ENCODE measurements at regions of chr1 and their contacts with region 1.

Region 1: GRCh38 chr1:241640029-241640818 is at the starts of genes CHML and OPN3:
- DNase-seq: peak; percentile 96
- H3K4me3 Mint-ChIP-seq: peak within 1 kb of the TSS; percentile 75
- H3K27ac Mint-ChIP-seq: peak within 1 kb of the TSS; percentile 100
- H3K4me1 Mint-ChIP-seq: peaks cover 56% of the 10 kb centered on the region
- H3K27me3 Mint-ChIP-seq: no peaks in the 10 kb centered on the region
- CTCF ChIP-seq: no peak
- total RNA-seq, gene CHML: 33.7 and 33.8 TPM in 2 replicates
- total RNA-seq, gene OPN3: 45.6 and 56.1 TPM in 2 replicates

Region 2: DNA sequence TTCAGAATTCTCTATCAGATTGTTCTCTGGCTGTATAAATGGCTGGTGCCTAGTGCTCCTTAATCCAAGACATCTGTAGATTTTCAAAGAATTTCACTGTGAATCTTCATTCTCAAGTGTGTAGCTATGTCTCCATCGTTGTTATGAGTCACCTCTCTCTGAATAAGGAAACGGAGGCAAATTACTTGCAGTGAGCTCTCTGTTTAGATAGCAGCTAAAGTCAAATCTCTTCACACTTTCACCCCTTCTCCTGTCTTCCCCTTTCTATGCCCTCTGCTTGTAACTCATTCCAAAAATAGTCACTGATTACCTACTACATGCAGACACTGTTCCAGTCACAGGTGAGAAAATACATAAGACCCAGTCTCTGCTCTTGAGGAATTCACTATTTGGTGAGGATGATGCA is 39.7 kb before region 1 on chr1:
- CTCF ChIA-PET with region 1: no interaction called
- POLR2A ChIA-PET with region 1: interaction called, 10 read pairs
- intact Hi-C with region 1: no loop called
- DNase-seq: peak; percentile 58
- H3K4me3 Mint-ChIP-seq: no peak overlapping the region
- H3K27ac Mint-ChIP-seq: peak overlapping the region; percentile 77
- H3K4me1 Mint-ChIP-seq: peaks cover 52% of the 10 kb centered on the region
- H3K27me3 Mint-ChIP-seq: no peaks in the 10 kb centered on the region
- CTCF ChIP-seq: no peak

Region 3: DNA sequence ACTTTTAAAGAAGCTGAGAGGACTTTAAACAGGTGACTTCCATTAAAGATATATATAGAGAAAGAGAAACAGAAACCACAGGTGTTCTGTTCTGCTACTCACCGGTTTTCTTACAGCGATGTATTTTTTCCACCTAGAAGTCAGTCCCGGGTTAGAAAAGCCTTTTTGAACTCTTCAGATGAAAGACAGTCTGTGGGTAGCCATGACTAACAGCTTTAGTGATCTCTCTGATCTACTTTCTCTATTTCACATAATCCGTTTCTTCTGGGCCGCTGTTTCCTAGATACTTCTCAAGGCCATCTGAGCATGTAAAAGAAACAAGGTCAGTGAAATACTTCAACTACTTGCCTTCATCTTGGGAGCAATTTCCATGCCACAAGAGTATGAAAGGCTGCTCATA is 37.0 kb after region 1 on chr1:
- CTCF ChIA-PET with region 1: no interaction called
- POLR2A ChIA-PET with region 1: interaction called, 13 read pairs
- intact Hi-C with region 1: no loop called
- DNase-seq: no peak
- H3K4me3 Mint-ChIP-seq: no peak overlapping the region
- H3K27ac Mint-ChIP-seq: no peak overlapping the region
- H3K4me1 Mint-ChIP-seq: no peaks in the 10 kb centered on the region
- H3K27me3 Mint-ChIP-seq: no peaks in the 10 kb centered on the region
- CTCF ChIP-seq: no peak

Region 4: GRCh38 chr1:241706954-241707365 is 66.7 kb after region 1 on chr1:
- CTCF ChIA-PET with region 1: interaction called, 7 read pairs
- POLR2A ChIA-PET with region 1: interaction called, 60 read pairs
- intact Hi-C with region 1: loop called (anchors 1 kb)
- DNase-seq: peak; percentile 97
- H3K4me3 Mint-ChIP-seq: peak overlapping the region; percentile 12
- H3K27ac Mint-ChIP-seq: peak overlapping the region; percentile 85
- H3K4me1 Mint-ChIP-seq: peaks cover 37% of the 10 kb centered on the region
- H3K27me3 Mint-ChIP-seq: no peaks in the 10 kb centered on the region
- CTCF ChIP-seq: no peak

Region 5: DNA sequence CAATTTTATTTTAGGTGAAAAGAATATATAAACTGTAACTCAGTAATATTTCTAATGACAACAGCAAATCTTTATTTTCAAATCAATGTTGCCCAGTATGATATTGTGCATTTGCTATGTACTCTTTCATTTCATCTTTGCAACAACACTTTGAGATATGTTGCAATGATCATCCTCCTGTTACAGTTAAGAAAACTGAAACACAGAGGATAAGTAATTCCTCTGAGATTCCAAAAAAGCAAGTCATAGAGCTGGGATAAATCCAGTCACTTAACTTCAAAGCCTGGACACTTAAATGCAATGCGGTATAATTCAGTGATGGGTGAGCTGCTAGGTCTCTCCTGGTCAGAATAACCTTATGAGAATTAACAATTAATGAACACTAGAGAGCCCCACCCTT is 159.2 kb after region 1 on chr1:
- CTCF ChIA-PET with region 1: interaction called, 3 read pairs
- POLR2A ChIA-PET with region 1: interaction called, 20 read pairs
- intact Hi-C with region 1: no loop called
- DNase-seq: peak; percentile 51
- H3K4me3 Mint-ChIP-seq: no peak overlapping the region
- H3K27ac Mint-ChIP-seq: peak overlapping the region; percentile 8
- H3K4me1 Mint-ChIP-seq: peaks cover 23% of the 10 kb centered on the region
- H3K27me3 Mint-ChIP-seq: no peaks in the 10 kb centered on the region
- CTCF ChIP-seq: no peak

Region 6: DNA sequence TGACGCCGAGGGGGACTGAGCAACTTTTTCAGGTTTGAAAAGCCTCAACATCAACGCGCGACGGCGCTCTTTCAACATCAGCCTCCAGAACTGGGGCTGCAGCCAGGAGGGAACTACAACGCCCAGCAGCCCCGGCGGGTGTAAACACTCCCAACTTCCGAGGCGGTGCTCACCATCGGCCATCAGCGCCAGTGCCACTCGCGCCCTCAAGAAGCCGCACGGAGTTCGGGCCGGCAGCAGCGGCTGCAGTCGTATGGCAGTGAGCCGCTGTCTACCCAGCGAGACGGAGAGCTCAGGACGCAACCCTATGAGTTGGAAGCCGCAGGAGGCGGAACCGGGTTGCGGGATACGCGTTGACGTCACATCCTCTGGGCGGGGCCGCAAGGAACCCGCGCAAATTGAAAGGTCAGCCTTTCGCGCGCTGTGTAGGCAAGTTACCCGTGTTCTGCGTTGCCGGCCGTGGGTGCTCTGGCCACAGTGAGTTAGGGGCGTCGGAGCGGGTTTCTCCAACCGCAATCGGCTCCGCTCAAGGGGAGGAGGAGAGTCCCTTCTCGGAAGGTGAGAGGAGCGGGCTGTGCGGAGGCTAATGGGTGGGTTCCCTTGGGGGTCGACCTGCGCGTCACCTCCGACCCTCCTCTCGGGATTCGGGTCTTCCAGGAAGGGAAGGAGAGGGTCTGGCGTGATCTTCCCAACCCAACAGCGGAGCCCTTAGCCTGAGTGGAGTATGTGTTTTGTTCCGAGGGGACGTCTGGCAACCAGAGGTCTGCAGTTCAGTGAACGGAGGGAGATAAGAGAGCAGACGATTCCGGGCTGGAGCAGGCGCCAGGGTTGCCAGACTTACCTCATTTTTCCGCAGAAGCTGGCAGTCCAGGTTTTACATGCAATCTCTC is 207.8 kb after region 1 on chr1 and contains the start of gene EXO1:
- CTCF ChIA-PET with region 1: no interaction called
- POLR2A ChIA-PET with region 1: interaction called, 11 read pairs
- intact Hi-C with region 1: no loop called
- DNase-seq: peak; percentile 98
- H3K4me3 Mint-ChIP-seq: peak within 1 kb of the TSS; percentile 95
- H3K27ac Mint-ChIP-seq: peak within 1 kb of the TSS; percentile 81
- H3K4me1 Mint-ChIP-seq: peaks cover 18% of the 10 kb centered on the region
- H3K27me3 Mint-ChIP-seq: no peaks in the 10 kb centered on the region
- CTCF ChIP-seq: peak; percentile 38
- total RNA-seq, gene EXO1: 7.3 and 17.5 TPM in 2 replicates